ENCODE measurements at regions of chr11 and their contacts with region 1.

Region 1: DNA sequence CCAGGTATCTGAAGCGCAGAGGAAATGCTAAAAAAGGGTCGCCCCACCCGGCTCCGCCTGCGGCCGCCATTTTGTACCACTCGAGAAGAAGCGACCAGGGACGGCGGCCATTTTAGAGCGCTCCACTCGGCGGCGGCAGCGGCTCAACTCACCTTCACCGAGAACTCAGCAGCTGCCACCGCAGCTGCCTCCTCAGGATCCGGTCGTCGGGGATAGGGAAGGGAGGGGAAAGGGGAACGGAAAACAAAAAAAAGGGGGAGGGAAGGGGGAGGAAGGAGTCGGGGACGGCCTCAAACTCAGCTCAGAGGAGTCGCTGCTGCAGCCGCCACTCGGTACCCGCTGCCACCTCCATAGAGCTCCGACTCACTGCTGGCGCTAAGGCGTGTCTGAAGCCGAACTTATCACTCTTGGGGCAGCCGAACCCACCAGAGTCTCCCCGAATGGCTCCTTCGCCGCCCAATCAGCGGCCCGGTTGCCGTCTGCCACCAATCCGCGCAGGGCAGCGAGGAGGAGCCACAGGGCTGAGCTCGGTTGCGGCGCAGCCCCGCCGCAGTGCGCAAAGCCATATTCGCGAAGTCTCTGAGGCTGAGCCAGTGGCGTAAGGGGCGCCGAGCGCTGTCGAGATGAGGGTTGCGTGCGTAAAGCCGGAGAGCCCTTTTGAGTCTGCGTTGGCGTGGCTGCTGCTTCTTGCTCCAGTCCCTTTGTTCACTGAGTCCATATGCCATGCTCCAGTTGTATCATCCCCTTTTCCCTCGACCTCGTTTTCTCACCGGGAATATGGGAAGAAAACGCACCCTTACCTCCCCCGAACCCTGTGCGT is at the start of gene EIF4G2:
- DNase-seq: peak; percentile 98 to 99
- ATAC-seq: peak; percentile 96 to 98
- H3K4me3 ChIP-seq: peak within 1 kb of the TSS; percentile 97
- H3K27ac ChIP-seq: peak within 1 kb of the TSS; percentile 95 to 99
- H3K4me1 ChIP-seq: peaks cover 43% of the 10 kb centered on the region
- CTCF ChIP-seq: no peak
- EP300 ChIP-seq: peak in 1 of 2 experiments; percentile 17; a peak in 1 of 5 replicates
- POLR2A ChIP-seq: peak; percentile 98
- RAD21 ChIP-seq: peak in 1 of 2 experiments; percentile 12; a peak in 2 of 5 replicates
- polyA plus RNA-seq, gene EIF4G2: 1,171 and 1,351 TPM in 2 replicates

Region 2: GRCh38 chr11:10441652-10442503 is 366.9 kb before region 1 on chr11:
- CTCF ChIA-PET with region 1: no interaction called
- POLR2A ChIA-PET with region 1: no interaction called
- DNase-seq: no peak
- ATAC-seq: no peak
- H3K4me3 ChIP-seq: no peak overlapping the region
- H3K27ac ChIP-seq: no peak overlapping the region
- H3K4me1 ChIP-seq: no peaks in the 10 kb centered on the region
- CTCF ChIP-seq: no peak
- EP300 ChIP-seq: no peak
- POLR2A ChIP-seq: no peak
- RAD21 ChIP-seq: no peak

Region 3: GRCh38 chr11:10770626-10771254 is 38.0 kb before region 1 on chr11:
- CTCF ChIA-PET with region 1: interaction called, 4 read pairs
- POLR2A ChIA-PET with region 1: interaction called, 10 read pairs
- DNase-seq: peak; percentile 60 to 72
- ATAC-seq: peak; percentile 73 to 85; a peak in 4 of 6 replicates
- H3K4me3 ChIP-seq: no peak overlapping the region
- H3K27ac ChIP-seq: no peak overlapping the region
- H3K4me1 ChIP-seq: no peaks in the 10 kb centered on the region
- CTCF ChIP-seq: peak; percentile 87
- EP300 ChIP-seq: no peak
- POLR2A ChIP-seq: no peak
- RAD21 ChIP-seq: peak; percentile 63 to 68

Region 4: GRCh38 chr11:10844356-10844755 is 35.6 kb after region 1 on chr11:
- CTCF ChIA-PET with region 1: interaction called, 4 read pairs
- POLR2A ChIA-PET with region 1: interaction called, 55 read pairs
- DNase-seq: no peak
- ATAC-seq: no peak
- H3K4me3 ChIP-seq: no peak overlapping the region
- H3K27ac ChIP-seq: no peak overlapping the region
- H3K4me1 ChIP-seq: no peaks in the 10 kb centered on the region
- CTCF ChIP-seq: no peak
- EP300 ChIP-seq: no peak
- POLR2A ChIP-seq: no peak
- RAD21 ChIP-seq: no peak

Region 5: GRCh38 chr11:10885703-10886363 is 77.1 kb after region 1 on chr11:
- CTCF ChIA-PET with region 1: no interaction called
- POLR2A ChIA-PET with region 1: interaction called, 21 read pairs
- DNase-seq: peak; percentile 18 to 91
- ATAC-seq: peak; percentile 90 to 92
- H3K4me3 ChIP-seq: no peak overlapping the region
- H3K27ac ChIP-seq: peak overlapping the region; percentile 79 to 90
- H3K4me1 ChIP-seq: peaks cover 47% of the 10 kb centered on the region
- CTCF ChIP-seq: no peak
- EP300 ChIP-seq: peak; percentile 64 to 89; a peak in 3 of 5 replicates
- POLR2A ChIP-seq: no peak
- RAD21 ChIP-seq: peak; percentile 21 to 23; a peak in 2 of 5 replicates

Region 6: GRCh38 chr11:10906513-10906912 is 97.8 kb after region 1 on chr11:
- CTCF ChIA-PET with region 1: interaction called, 12 read pairs
- POLR2A ChIA-PET with region 1: interaction called, 91 read pairs
- DNase-seq: peak in 1 of 2 experiments; percentile 61
- ATAC-seq: peak; percentile 45 to 73; a peak in 4 of 6 replicates
- H3K4me3 ChIP-seq: no peak overlapping the region
- H3K27ac ChIP-seq: peak overlapping the region in 1 of 2 experiments; percentile 60; a peak in 3 of 6 replicates
- H3K4me1 ChIP-seq: peaks cover 28% of the 10 kb centered on the region
- CTCF ChIP-seq: peak; percentile 24; the same call in 1 of the 3 replicates
- EP300 ChIP-seq: no peak
- POLR2A ChIP-seq: no peak
- RAD21 ChIP-seq: peak; percentile 50 to 52; a peak in 4 of 5 replicates

Region 7: GRCh38 chr11:10933455-10934292 is 124.9 kb after region 1 on chr11:
- CTCF ChIA-PET with region 1: interaction called, 8 read pairs
- POLR2A ChIA-PET with region 1: interaction called, 82 read pairs
- DNase-seq: peak; percentile 90 to 93
- ATAC-seq: peak; percentile 75 to 86
- H3K4me3 ChIP-seq: peak overlapping the region; percentile 45
- H3K27ac ChIP-seq: peak overlapping the region; percentile 98
- H3K4me1 ChIP-seq: peaks cover 40% of the 10 kb centered on the region
- CTCF ChIP-seq: peak; percentile 97
- EP300 ChIP-seq: no peak
- POLR2A ChIP-seq: peak; percentile 18; the same call in 1 of the 2 replicates
- RAD21 ChIP-seq: peak; percentile 97 to 99

Measured in A549 (cell line).